ENCODE measurements at regions of chr16 and their contacts with region 1.

Region 1: DNA sequence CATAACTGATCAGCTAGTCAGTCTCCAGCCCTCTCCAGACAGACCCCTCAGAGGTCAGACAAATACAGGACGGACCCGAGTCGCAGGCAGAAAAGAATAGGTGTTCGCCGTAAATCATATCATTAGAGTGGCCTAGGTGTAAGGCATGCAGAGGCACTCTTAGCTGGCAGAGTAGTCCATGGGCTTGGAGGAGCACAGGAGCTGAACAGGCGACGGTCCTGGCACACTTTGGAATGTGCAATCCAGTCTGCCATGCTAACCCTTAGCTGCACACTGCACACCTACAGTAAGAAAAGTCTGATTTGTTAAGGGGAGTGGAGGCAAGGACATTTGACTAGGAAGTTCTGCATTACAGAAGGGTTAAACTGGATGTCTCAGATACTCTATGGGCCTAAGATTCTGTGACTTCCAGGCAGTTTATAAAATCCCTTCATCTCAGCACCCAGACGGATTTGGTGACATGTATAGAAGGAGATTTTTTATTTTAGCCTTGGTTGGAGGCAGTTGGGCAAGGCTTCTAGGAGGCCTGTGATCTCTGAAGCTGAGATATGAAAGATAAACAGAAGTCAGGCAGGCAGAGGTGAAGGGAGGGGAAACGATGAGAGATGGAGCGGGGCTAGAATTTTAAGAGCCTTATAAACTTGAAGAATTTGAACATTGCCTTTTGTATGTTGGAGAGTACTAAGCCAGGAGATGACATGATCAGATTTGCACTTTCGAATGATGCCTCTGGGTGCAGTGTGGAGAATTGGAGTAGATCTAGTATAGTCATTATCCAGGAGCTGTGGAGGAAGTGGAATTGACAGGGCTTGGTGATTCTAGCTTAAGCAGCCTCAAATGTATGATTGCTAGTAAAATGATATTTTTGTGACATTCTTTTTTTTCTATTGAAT is 34.6 kb upstream of the SLC5A11 start:
- DNase-seq: no peak
- H3K4me3 ChIP-seq: no peak overlapping the region
- H3K27ac ChIP-seq: no peak overlapping the region
- H3K4me1 ChIP-seq: no peaks in the 10 kb centered on the region
- H3K27me3 ChIP-seq: no peaks in the 10 kb centered on the region
- CTCF ChIP-seq: no peak

Region 2: GRCh38 chr16:24525970-24526559 is 285.1 kb before region 1 on chr16:
- CTCF ChIA-PET with region 1: no interaction called
- POLR2A ChIA-PET with region 1: interaction called, 10 read pairs
- intact Hi-C with region 1: no loop called
- DNase-seq: peak; percentile 39 to 85
- H3K4me3 ChIP-seq: no peak overlapping the region
- H3K27ac ChIP-seq: no peak overlapping the region
- H3K4me1 ChIP-seq: peaks cover 14% of the 10 kb centered on the region
- H3K27me3 ChIP-seq: no peaks in the 10 kb centered on the region
- CTCF ChIP-seq: no peak

Region 3: GRCh38 chr16:25014500-25015147 is 203.4 kb after region 1 on chr16:
- CTCF ChIA-PET with region 1: no interaction called
- POLR2A ChIA-PET with region 1: no interaction called
- intact Hi-C with region 1: no loop called
- DNase-seq: peak; percentile 33 to 46
- H3K4me3 ChIP-seq: peak overlapping the region; percentile 95
- H3K27ac ChIP-seq: peak overlapping the region; percentile 52
- H3K4me1 ChIP-seq: peaks cover 26% of the 10 kb centered on the region
- H3K27me3 ChIP-seq: no peaks in the 10 kb centered on the region
- CTCF ChIP-seq: no peak